OCI-LY7 (cell line): ENCODE measurements at regions of chr12 and their contacts with region 1.

Region 1: GRCh38 chr12:81699567-81699966 is 59.6 kb downstream of the PPFIA2 start:
- DNase-seq: no peak
- H3K4me3 ChIP-seq: no peak overlapping the region
- H3K27ac ChIP-seq: no peak overlapping the region
- H3K4me1 ChIP-seq: no peaks in the 10 kb centered on the region
- CTCF ChIP-seq: no peak

Region 2: GRCh38 chr12:81303935-81304334 is 395.6 kb before region 1 on chr12:
- CTCF ChIA-PET with region 1: no interaction called
- POLR2A ChIA-PET with region 1: no interaction called
- intact Hi-C with region 1: no loop called
- DNase-seq: no peak
- H3K4me3 ChIP-seq: no peak overlapping the region
- H3K27ac ChIP-seq: no peak overlapping the region
- H3K4me1 ChIP-seq: no peaks in the 10 kb centered on the region
- CTCF ChIP-seq: no peak

Region 3: GRCh38 chr12:81610955-81611889 is 88.3 kb before region 1 on chr12:
- CTCF ChIA-PET with region 1: no interaction called
- POLR2A ChIA-PET with region 1: no interaction called
- intact Hi-C with region 1: no loop called
- DNase-seq: peak; percentile 2
- H3K4me3 ChIP-seq: no peak overlapping the region
- H3K27ac ChIP-seq: no peak overlapping the region
- H3K4me1 ChIP-seq: no peaks in the 10 kb centered on the region
- CTCF ChIP-seq: peak; percentile 65

Region 4: DNA sequence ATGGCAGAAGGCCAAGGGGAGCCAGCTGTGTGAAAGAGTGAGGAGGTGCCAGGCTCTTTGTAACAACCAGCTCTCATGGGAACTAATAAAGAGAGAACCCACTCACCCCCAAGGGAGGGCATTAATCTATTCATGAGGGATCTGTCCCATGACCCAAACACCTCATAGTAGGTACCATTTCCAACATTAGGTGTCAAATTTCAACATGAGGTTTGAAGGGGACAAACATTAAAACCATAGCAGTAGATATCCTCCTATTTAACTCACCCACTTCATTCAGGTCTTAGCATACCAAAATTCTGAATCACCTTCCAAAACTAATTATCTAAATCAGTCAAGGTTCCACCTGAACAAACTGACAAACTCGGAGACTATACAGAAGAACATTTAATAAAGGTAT is 15.7 kb before region 1 on chr12:
- CTCF ChIA-PET with region 1: no interaction called
- POLR2A ChIA-PET with region 1: no interaction called
- intact Hi-C with region 1: no loop called
- DNase-seq: no peak
- H3K4me3 ChIP-seq: no peak overlapping the region
- H3K27ac ChIP-seq: no peak overlapping the region
- H3K4me1 ChIP-seq: no peaks in the 10 kb centered on the region
- CTCF ChIP-seq: no peak

Region 5: DNA sequence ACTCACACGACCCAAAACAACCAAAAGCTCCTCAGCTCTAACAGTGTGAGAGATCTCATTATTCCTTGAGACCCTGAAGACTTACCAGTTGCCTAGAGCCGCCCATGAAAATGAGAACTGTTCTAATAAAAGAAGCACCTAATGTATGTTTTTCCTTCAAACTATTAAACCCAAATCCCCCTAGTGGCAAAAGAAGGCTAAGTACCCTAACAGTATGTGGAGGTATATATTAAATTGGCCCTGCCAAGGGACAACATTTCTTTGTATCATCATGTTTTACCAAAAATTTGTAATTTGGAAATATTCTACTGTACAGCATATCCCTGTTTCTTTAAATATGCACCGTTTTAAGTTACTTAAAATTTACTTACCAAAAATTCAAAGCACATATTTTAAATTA is 97.5 kb after region 1 on chr12:
- CTCF ChIA-PET with region 1: no interaction called
- POLR2A ChIA-PET with region 1: no interaction called
- intact Hi-C with region 1: loop called (anchors 5 kb)
- DNase-seq: peak; percentile 29
- H3K4me3 ChIP-seq: no peak overlapping the region
- H3K27ac ChIP-seq: no peak overlapping the region
- H3K4me1 ChIP-seq: no peaks in the 10 kb centered on the region
- CTCF ChIP-seq: peak; percentile 74